ENCODE measurements at regions of chr2 and their contacts with region 1.

Region 1: GRCh38 chr2:177164584-177165052 is 48.0 kb upstream of the HNRNPA3 start:
- DNase-seq: peak; percentile 80 to 92 (median 82)
- ATAC-seq: peak; percentile 64
- H3K4me3 ChIP-seq: no peak overlapping the region
- H3K27ac ChIP-seq: peak overlapping the region; percentile 71; the same call in 2 of the 3 replicates
- H3K4me1 ChIP-seq: peaks cover 15 to 40% of the 10 kb centered on the region in 2 experiments
- H3K27me3 ChIP-seq: no peaks in the 10 kb centered on the region
- CTCF ChIP-seq: peak; percentile 97 to 100 (median 99)
- EP300 ChIP-seq: peak; percentile 78
- POLR2A ChIP-seq: no peak
- RAD21 ChIP-seq: peak; percentile 100

Region 2: DNA sequence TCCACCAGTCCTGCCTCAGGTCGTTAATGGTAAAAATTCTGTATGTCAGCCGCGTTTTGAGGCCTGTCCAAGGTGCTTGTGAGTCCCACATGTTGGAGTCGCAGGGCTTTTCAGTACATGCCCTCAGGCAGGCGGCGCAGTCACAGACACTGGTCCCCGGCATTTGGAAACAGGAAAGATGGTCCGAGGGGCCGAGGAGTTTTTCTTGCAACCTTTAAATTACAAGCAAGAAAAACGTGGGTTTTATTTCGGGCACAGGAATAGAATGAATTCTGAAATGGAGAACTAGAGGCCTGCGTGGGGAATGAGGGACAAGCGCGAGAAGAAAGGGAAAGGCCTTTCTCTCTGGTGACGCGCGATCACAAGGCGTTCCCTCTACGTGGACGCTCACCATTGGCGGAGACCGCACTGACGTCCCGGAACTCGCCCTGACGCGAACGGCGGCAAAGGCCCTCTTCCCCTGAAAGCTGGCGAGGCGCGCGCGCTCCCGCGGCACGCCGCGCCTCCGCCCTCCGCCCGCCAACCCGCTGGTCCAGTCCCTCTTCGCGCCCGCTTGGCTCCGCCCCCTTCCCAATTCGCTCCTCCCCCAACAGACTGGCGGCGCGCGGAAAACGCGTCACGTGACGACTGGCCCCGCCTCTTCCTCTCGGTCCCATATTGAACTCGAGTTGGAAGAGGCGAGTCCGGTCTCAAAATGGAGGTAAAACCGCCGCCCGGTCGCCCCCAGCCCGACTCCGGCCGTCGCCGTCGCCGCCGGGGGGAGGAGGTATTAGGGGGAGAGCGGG is 47.7 kb after region 1 on chr2 and contains the start of gene HNRNPA3:
- CTCF ChIA-PET with region 1: interaction called, 4 read pairs
- POLR2A ChIA-PET with region 1: interaction called, 8 read pairs
- in situ Hi-C with region 1: no loop called
- intact Hi-C with region 1: loop called (anchors 1 kb)
- DNase-seq: peak; percentile 98 to 100 (median 98)
- ATAC-seq: peak; percentile 88
- H3K4me3 ChIP-seq: peak within 1 kb of the TSS; percentile 90
- H3K27ac ChIP-seq: peak within 1 kb of the TSS; percentile 99
- H3K4me1 ChIP-seq: peaks cover 5 to 7% of the 10 kb centered on the region in 2 experiments; a peak in 4 of 5 replicates
- H3K27me3 ChIP-seq: no peaks in the 10 kb centered on the region
- CTCF ChIP-seq: peak in 2 of 3 experiments; percentile 27 to 47; a peak in 4 of 6 replicates
- EP300 ChIP-seq: no peak
- POLR2A ChIP-seq: peak; percentile 99
- RAD21 ChIP-seq: peak in 1 of 2 experiments; percentile 39; a peak in 2 of 4 replicates
- polyA plus RNA-seq, gene HNRNPA3: 108 to 192 TPM

Region 3: DNA sequence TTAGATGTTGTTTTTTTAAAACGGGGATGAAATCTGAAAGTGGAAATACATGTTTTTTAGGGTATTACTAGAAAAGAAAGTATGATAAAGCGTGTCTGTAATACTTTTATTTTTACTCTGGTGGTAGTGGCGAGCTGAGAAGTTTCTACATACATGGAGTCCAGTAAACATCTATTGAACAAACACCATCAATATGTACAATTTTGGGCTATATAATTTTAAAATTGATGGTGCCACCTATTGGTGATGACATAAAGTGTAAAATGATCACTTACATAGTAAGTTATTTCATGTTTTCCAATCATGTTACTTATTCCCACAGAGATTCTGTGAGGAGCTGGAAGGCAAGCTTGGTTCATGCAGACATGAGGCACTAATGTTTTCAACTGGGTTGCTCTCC is 131.4 kb after region 1 on chr2:
- CTCF ChIA-PET with region 1: interaction called, 14 read pairs
- POLR2A ChIA-PET with region 1: no interaction called
- in situ Hi-C with region 1: no loop called
- intact Hi-C with region 1: loop called (anchors 1 kb)
- DNase-seq: peak in 1 of 4 experiments; percentile 43
- ATAC-seq: peak; percentile 59
- H3K4me3 ChIP-seq: no peak overlapping the region
- H3K27ac ChIP-seq: no peak overlapping the region
- H3K4me1 ChIP-seq: no peaks in the 10 kb centered on the region
- H3K27me3 ChIP-seq: no peaks in the 10 kb centered on the region
- CTCF ChIP-seq: peak; percentile 36 to 62 (median 53); a peak in 5 of 6 replicates
- EP300 ChIP-seq: no peak
- POLR2A ChIP-seq: no peak
- RAD21 ChIP-seq: peak; percentile 49 to 77; a peak in 3 of 4 replicates

Region 4: DNA sequence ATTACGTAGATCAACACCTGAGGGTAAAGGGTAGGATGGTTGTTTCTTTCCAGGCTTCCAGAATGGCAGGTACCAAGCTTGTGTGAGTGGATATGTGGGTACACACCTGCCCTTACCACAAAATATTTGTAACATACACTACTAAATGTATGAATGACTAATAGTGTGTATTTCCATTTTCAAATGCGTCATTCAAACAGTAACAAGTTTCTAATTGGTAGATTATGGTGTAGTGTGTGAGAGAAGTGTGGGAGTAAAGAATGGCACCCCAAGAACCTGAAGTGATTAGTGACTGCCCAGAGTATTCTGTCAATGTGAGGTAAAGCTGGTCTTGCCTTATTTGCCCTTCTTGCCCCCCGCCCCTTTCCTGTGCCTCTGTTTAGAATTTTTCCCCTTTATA is 249.1 kb after region 1 on chr2:
- CTCF ChIA-PET with region 1: interaction called, 47 read pairs
- POLR2A ChIA-PET with region 1: interaction called, 7 read pairs
- in situ Hi-C with region 1: loop called (anchors 10 kb)
- intact Hi-C with region 1: loop called (anchors 1 kb)
- DNase-seq: no peak
- ATAC-seq: no peak
- H3K4me3 ChIP-seq: no peak overlapping the region
- H3K27ac ChIP-seq: no peak overlapping the region
- H3K4me1 ChIP-seq: no peaks in the 10 kb centered on the region
- H3K27me3 ChIP-seq: no peaks in the 10 kb centered on the region
- CTCF ChIP-seq: no peak
- EP300 ChIP-seq: no peak
- POLR2A ChIP-seq: no peak
- RAD21 ChIP-seq: no peak

Region 5: DNA sequence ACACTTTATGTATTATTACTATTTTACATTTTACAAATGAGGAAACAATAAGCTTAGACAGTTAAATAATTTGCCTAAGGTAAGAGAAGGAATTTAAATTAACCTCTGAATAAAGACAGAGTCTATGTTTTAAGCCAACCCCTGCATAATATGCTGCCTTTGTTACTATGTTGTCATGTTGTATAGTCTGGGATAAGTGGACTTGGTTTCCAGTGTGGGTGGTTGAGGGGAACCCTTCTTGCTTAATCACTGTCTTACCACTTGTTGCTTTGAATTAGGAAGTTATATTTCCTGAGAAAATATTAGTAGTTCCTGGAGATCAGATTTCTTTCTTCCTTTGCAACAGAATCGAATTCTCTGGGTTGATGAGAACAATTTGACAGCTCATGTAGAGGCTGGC is 280.6 kb after region 1 on chr2:
- CTCF ChIA-PET with region 1: no interaction called
- POLR2A ChIA-PET with region 1: no interaction called
- in situ Hi-C with region 1: no loop called
- intact Hi-C with region 1: no loop called
- DNase-seq: no peak
- ATAC-seq: no peak
- H3K4me3 ChIP-seq: no peak overlapping the region
- H3K27ac ChIP-seq: no peak overlapping the region
- H3K4me1 ChIP-seq: 0 out of 5 replicates have a peak, but pooled peaks cover 0 to 3% of the 10 kb centered on the region in 2 experiments
- H3K27me3 ChIP-seq: no peaks in the 10 kb centered on the region
- CTCF ChIP-seq: no peak
- EP300 ChIP-seq: no peak
- POLR2A ChIP-seq: no peak
- RAD21 ChIP-seq: no peak

Region 6: GRCh38 chr2:177489719-177490301 is 325.2 kb after region 1 on chr2:
- CTCF ChIA-PET with region 1: no interaction called
- POLR2A ChIA-PET with region 1: no interaction called
- in situ Hi-C with region 1: no loop called
- intact Hi-C with region 1: loop called (anchors 10 kb)
- DNase-seq: peak in 3 of 4 experiments; percentile 19 to 35 (median 21)
- ATAC-seq: peak; percentile 70
- H3K4me3 ChIP-seq: no peak overlapping the region
- H3K27ac ChIP-seq: no peak overlapping the region
- H3K4me1 ChIP-seq: no peaks in the 10 kb centered on the region
- H3K27me3 ChIP-seq: no peaks in the 10 kb centered on the region
- CTCF ChIP-seq: peak; percentile 36 to 83 (median 50); a peak in 5 of 6 replicates
- EP300 ChIP-seq: no peak
- POLR2A ChIP-seq: no peak
- RAD21 ChIP-seq: peak; percentile 74 to 84

Region 7: DNA sequence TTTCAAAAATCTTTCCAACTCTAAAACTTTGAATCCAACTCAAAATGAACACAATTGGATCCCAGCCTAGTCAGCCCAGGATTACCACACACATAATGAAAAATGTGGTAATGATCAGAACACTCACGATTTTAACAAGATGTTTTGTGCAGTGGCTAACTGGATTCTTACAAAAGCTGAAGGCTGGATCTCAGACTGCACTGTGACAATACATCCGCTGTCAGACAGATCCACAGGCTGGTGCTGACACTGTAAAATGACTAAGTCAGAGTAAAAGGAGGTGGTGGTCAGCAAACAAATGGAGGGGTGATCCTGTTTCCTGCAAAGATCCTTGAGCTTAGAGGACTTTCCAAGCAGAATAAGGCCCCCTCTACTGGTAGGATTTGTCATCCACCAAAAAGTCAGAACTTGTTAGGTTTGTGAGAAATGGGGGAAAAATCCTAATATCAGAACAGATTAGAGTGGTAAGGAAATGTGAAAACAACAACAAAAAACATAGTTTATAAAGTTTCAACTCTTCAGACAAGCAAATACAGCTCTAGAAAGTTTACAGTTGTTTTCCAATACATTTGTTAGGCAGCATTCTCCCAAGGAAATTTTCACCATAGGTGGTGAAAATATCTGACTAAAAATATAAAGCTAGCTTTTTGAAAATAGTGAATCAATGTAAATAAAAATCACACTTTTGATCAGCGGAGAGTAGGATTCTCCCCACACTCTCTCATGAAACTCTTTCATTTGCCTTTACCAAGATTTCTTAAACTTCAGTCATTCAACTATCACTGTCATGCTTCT is 439.9 kb after region 1 on chr2:
- CTCF ChIA-PET with region 1: no interaction called
- POLR2A ChIA-PET with region 1: interaction called, 4 read pairs
- in situ Hi-C with region 1: loop called (anchors 10 kb)
- intact Hi-C with region 1: loop called (anchors 5 kb)
- DNase-seq: peak; percentile 45 to 72 (median 53)
- ATAC-seq: peak; percentile 88
- H3K4me3 ChIP-seq: no peak overlapping the region
- H3K27ac ChIP-seq: no peak overlapping the region
- H3K4me1 ChIP-seq: no peaks in the 10 kb centered on the region
- H3K27me3 ChIP-seq: no peaks in the 10 kb centered on the region; a peak in 1 of 5 replicates
- CTCF ChIP-seq: peak; percentile 67 to 79 (median 77)
- EP300 ChIP-seq: no peak
- POLR2A ChIP-seq: no peak
- RAD21 ChIP-seq: peak; percentile 69 to 87

Region 8: DNA sequence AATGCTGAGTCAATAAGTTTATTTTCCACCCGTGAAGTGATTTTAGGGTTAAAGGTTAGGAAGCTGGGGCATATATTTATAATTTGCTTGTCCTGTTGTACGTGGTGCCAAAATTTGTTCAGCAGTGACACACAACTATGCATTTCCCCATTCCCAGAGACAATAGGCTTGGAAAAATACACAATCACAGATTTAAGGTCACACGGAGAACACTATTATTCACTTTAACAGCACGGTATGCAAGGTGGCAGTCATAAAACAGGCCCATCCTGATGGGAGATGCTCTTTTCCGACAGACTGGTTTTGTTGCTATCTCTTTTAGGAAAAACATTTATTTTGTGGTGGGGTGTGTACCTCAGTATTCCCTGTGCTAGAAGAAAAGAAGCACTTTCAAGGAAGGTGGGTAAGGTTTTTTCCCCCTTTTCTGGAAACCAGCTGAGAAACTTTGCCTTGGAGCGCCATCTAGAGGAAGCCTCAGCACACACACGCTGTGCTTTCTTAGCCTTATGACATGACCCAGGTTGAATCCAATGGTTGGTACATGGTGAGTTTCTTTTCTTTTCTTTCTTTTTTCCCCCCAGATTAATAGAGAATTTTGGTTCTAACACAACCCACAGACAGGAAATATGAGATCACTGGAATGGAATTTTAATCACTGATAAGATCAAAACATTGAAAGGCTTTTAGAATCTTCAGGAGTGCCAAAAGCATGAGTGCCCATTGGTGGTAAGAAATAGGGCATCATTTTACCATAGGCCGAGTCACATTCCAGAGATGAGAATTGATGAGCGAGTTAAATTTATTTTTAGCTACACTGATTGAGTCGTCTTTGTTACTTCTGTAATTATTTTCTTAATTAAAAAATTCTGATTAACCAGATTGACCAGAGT is 560.0 kb after region 1 on chr2:
- CTCF ChIA-PET with region 1: interaction called, 12 read pairs
- POLR2A ChIA-PET with region 1: no interaction called
- in situ Hi-C with region 1: loop called (anchors 10 kb)
- intact Hi-C with region 1: loop called (anchors 1 kb)
- DNase-seq: peak; percentile 76 to 81 (median 79)
- ATAC-seq: peak; percentile 76
- H3K4me3 ChIP-seq: no peak overlapping the region
- H3K27ac ChIP-seq: no peak overlapping the region
- H3K4me1 ChIP-seq: peaks cover 0 to 29% of the 10 kb centered on the region in 2 experiments; a peak in 4 of 5 replicates
- H3K27me3 ChIP-seq: no peaks in the 10 kb centered on the region
- CTCF ChIP-seq: peak; percentile 87 to 96 (median 96)
- EP300 ChIP-seq: no peak
- POLR2A ChIP-seq: no peak
- RAD21 ChIP-seq: peak; percentile 92 to 98

Region 9: DNA sequence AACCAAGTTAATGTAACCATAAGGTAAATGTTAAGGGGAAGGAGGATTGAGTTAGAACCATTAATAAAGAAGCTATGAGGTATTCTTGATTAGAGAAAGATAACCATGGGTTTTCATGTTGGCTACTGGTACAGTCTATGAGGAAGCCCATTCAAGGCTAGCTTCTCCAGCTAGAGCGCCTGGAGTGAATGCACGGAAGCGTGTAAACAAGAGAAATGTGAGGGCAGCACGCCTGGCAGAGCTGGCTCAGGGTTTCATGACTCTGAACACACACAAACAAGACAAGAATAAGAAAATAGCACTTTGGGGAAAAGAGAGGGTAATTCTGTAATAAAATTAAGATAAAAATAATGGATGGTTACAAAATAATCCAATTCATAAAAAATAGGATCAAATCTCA is 652.7 kb after region 1 on chr2:
- CTCF ChIA-PET with region 1: no interaction called
- POLR2A ChIA-PET with region 1: no interaction called
- in situ Hi-C with region 1: no loop called
- intact Hi-C with region 1: no loop called
- DNase-seq: no peak
- ATAC-seq: no peak
- H3K4me3 ChIP-seq: no peak overlapping the region
- H3K27ac ChIP-seq: no peak overlapping the region
- H3K4me1 ChIP-seq: no peaks in the 10 kb centered on the region
- H3K27me3 ChIP-seq: no peaks in the 10 kb centered on the region
- CTCF ChIP-seq: no peak
- EP300 ChIP-seq: no peak
- POLR2A ChIP-seq: no peak
- RAD21 ChIP-seq: no peak